Activated CD4-positive, alpha-beta T cell treated with anti-CD3 and anti-CD28 coated beads for 36 hours (primary cell): ENCODE measurements at regions of chr12 and their contacts with region 1.

Region 1: DNA sequence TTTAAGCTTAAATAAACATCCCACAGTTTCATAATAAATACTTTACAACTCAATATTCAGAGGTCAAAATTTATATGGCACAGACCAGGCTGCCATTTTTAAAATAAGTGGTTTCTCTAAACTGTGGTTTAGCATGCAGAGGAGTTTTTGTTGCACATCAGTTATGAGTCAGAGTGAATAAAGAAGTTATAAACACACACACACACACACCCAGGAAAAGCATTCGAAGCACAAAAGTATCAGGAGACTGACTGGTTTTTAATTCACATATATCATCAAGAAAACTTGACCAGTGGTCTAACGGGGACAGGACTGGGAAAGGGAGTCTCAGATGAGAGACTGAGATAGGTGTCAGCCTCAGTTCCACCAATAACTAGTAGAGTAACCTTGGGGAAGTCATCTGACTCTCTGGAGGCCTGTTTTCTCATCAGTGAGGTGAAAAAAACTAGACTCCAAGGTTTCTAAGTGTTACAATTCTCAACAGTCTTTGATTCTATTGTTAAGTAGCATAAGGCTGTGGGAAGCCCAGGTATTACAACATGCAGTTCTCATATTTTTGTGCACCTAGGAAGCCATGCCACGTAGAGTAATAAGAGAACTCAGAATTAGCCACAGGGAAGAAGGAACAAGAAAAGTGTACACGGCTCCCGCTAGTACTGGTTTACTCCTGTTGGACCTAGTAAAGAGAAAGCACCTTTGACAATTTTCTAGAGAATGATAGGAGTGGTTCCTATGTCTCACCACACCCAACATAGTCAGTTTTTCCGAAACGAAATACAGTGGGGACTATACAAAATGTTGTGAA is 5.2 kb downstream of the PPTC7 start:
- DNase-seq: peak; percentile 61
- ATAC-seq: peak; percentile 67
- H3K4me3 Mint-ChIP-seq: peak overlapping the region; percentile 91
- H3K27ac Mint-ChIP-seq: peak overlapping the region; percentile 100
- H3K4me1 Mint-ChIP-seq: peaks cover 80% of the 10 kb centered on the region
- H3K27me3 Mint-ChIP-seq: no peaks in the 10 kb centered on the region

Region 2: GRCh38 chr12:110563702-110564640 is 13.9 kb before region 1 on chr12:
- CTCF ChIA-PET with region 1: interaction called, 19 read pairs
- POLR2A ChIA-PET with region 1: interaction called, 6 read pairs
- intact Hi-C with region 1: loop called (anchors 1 kb)
- DNase-seq: no peak
- ATAC-seq: no peak
- H3K4me3 Mint-ChIP-seq: no peak overlapping the region
- H3K27ac Mint-ChIP-seq: peak overlapping the region; percentile 76
- H3K4me1 Mint-ChIP-seq: peaks cover 73% of the 10 kb centered on the region
- H3K27me3 Mint-ChIP-seq: no peaks in the 10 kb centered on the region

Region 3: DNA sequence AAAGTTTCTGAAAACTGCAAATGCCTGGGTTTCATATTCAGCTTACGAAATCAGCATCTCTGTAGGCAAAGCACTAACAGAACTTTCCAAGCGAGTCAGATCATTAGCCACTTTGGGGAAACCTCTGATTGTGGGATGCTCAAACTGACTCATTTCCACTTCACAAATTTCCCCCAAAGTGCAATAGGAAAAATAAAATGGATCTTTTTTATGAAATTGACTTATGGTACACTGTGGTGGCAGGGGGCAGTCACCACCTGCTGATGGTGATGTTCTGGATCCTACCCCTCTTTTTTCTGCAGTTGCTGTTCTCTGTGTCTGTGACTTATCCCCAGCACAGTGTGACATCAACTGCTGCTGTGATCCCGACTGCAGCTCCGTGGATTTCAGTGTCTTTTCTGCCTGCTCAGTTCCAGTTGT is 41.6 kb after region 1 on chr12:
- CTCF ChIA-PET with region 1: interaction called, 4 read pairs
- POLR2A ChIA-PET with region 1: interaction called, 3 read pairs
- intact Hi-C with region 1: loop called in 1 of 2 experiments (anchors 1 kb)
- DNase-seq: peak; percentile 68
- ATAC-seq: peak; percentile 92
- H3K4me3 Mint-ChIP-seq: peak overlapping the region; percentile 19
- H3K27ac Mint-ChIP-seq: peak overlapping the region; percentile 55
- H3K4me1 Mint-ChIP-seq: peaks cover 20% of the 10 kb centered on the region
- H3K27me3 Mint-ChIP-seq: no peaks in the 10 kb centered on the region